ENCODE measurements at regions of chr2 and their contacts with region 1.

Region 1: DNA sequence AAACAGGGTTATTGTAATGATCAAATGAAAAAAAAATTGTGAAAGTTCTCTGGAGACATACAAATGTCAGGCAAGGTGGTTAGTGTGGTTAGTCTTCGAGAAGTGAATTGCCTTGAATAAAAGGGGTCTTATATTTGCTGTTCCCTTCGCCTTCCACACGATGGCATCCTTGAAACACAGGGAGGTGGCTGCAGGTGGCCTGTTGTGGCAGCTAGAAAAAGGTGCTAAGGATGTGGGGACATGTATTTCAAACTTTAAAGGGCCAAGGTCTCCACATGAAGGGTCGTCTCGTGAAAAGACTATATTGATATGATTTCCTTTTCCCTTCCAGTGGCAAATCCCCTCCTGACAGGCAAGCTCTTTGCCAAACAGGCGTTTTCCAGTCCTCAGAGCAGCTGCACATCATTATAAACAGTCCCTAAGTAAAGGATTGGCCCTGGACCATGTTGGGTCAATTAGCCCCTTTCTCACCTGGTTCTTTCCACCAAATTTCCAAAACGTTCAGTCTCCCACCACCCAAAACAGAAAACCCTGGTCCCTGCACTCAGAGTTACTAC is 68.5 kb downstream of the COPS8 start:
- DNase-seq: peak; percentile 65
- H3K4me3 Mint-ChIP-seq: no peak overlapping the region
- H3K27ac Mint-ChIP-seq: no peak overlapping the region
- H3K4me1 Mint-ChIP-seq: peaks cover 10% of the 10 kb centered on the region
- H3K27me3 Mint-ChIP-seq: peaks cover 24% of the 10 kb centered on the region

Region 2: GRCh38 chr2:237122214-237122666 is 31.9 kb before region 1 on chr2:
- CTCF ChIA-PET with region 1: no interaction called
- DNase-seq: peak; percentile 55
- H3K4me3 Mint-ChIP-seq: no peak overlapping the region
- H3K27ac Mint-ChIP-seq: peak overlapping the region; percentile 25
- H3K4me1 Mint-ChIP-seq: no peaks in the 10 kb centered on the region
- H3K27me3 Mint-ChIP-seq: no peaks in the 10 kb centered on the region

Region 3: GRCh38 chr2:237171396-237171795 is 17.2 kb after region 1 on chr2:
- CTCF ChIA-PET with region 1: no interaction called
- DNase-seq: no peak
- H3K4me3 Mint-ChIP-seq: no peak overlapping the region
- H3K27ac Mint-ChIP-seq: no peak overlapping the region
- H3K4me1 Mint-ChIP-seq: no peaks in the 10 kb centered on the region
- H3K27me3 Mint-ChIP-seq: peaks cover 8% of the 10 kb centered on the region

Region 4: DNA sequence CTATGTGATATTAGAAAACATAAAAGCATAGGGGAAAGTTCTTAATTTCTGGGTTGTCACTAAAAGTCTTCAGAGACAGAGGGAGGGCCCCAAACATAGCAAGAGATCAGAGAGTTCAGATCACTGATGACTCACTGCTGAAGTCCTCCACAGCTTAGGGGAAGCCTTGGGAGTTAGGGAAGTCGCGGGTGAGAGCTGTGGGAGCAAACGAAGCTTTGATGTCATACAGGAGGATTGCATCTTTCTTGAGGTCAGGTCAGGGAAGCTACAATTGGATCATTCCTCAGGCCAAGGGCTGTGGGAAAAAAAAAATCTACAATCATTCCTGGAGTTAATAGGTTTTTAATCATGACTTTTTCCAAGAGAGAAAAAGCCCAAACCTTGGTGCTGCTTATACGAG is 27.7 kb after region 1 on chr2:
- CTCF ChIA-PET with region 1: no interaction called
- DNase-seq: no peak
- H3K4me3 Mint-ChIP-seq: no peak overlapping the region
- H3K27ac Mint-ChIP-seq: no peak overlapping the region
- H3K4me1 Mint-ChIP-seq: no peaks in the 10 kb centered on the region
- H3K27me3 Mint-ChIP-seq: peaks cover 28% of the 10 kb centered on the region

Region 5: DNA sequence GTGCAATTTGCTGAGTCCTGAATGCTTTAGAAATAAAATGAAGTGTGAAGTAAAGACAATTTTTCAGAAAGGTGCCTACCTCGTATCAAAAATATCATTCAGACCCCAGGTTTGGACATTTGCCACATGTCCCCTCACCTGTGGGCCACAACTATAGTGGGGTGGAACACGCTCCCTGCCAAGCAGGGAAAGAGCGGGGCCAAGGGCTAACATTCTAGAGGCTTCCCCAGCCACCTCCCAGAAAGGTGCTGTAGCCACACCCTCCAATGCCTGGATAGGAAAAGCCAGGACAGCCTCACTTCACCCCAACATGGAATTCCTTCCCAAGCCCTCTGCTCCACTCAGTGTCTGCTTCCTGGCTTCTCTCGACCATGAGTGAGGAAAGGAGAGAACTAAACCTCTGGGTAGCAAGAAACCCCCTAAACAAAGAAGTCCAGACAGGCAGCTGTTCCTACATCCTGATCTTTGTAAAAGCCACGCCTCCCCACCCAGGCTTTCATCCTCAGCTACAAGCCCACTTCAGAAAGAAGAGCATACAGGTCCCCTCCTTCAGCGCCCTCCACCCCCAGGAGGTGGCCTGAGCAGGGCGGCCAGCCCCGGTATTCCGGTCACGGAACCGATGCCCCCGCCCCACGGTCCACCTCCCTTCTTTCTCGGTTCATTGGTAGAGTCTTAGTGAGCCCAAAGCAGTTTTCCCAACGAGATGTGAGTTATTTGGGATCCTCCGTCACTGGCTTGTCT is 257.7 kb after region 1 on chr2:
- CTCF ChIA-PET with region 1: interaction called, 14 read pairs
- DNase-seq: no peak
- H3K4me3 Mint-ChIP-seq: no peak overlapping the region
- H3K27ac Mint-ChIP-seq: no peak overlapping the region
- H3K4me1 Mint-ChIP-seq: no peaks in the 10 kb centered on the region
- H3K27me3 Mint-ChIP-seq: peaks cover 24% of the 10 kb centered on the region

Measured in activated naive CD4-positive, alpha-beta T cell treated with anti-CD3 and anti-CD28 coated beads, Interleukin-2, amount 10 ng/mL, durations not matched to agents 7 days and 5 days (primary cell).